Prostate gland (tissue), 2 donors: ENCODE measurements at regions of chr2 and their contacts with region 1.

Region 1: DNA sequence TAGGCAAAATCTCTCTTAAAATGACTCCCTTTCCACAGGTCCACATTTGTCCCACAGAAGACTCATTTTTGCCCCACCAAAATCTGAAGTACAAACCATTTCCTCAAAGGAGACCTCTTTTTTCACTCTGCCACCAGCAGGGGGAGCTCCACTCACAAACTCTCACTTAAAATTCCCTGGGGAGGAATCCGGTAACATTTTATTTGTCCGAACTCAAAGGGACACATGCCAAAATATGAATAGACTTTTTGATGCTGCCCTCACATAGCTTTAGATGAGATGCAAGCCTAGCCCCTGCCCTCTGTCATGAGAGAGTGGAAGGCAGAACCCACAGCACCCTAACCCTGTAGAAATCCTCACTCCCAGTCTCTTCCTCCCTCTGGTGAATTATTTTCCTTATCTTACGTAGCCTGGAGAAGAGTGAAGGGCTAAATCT is 57.1 kb downstream of the RMDN2 start:
- DNase-seq: peak; percentile 60
- H3K4me3 ChIP-seq: no peak overlapping the region
- H3K27ac ChIP-seq: no peak overlapping the region
- H3K4me1 ChIP-seq: no peaks in the 10 kb centered on the region
- H3K27me3 ChIP-seq: no peaks in the 10 kb centered on the region
- CTCF ChIP-seq: peak; percentile 78 to 90 (median 82)
- POLR2A ChIP-seq: no peak

Region 2: GRCh38 chr2:37925063-37925897 is 56.9 kb before region 1 on chr2 and contains the start of gene RMDN2:
- intact Hi-C with region 1: no loop called
- DNase-seq: peak; percentile 84
- H3K4me3 ChIP-seq: peak within 1 kb of the TSS; percentile 86 to 87
- H3K27ac ChIP-seq: peak within 1 kb of the TSS; percentile 89 to 90
- H3K4me1 ChIP-seq: no peaks in the 10 kb centered on the region
- H3K27me3 ChIP-seq: no peaks in the 10 kb centered on the region
- CTCF ChIP-seq: peak in 1 of 4 experiments; percentile 8
- POLR2A ChIP-seq: peak; percentile 28
- total RNA-seq, gene RMDN2: 9.0 to 9.2 TPM

Region 3: GRCh38 chr2:38260469-38260868 is 278.3 kb after region 1 on chr2:
- intact Hi-C with region 1: no loop called
- DNase-seq: no peak
- H3K4me3 ChIP-seq: no peak overlapping the region
- H3K27ac ChIP-seq: peak overlapping the region in 1 of 2 donors; percentile 17
- H3K4me1 ChIP-seq: no peaks in the 10 kb centered on the region
- H3K27me3 ChIP-seq: no peaks in the 10 kb centered on the region
- CTCF ChIP-seq: no peak
- POLR2A ChIP-seq: no peak

Region 4: DNA sequence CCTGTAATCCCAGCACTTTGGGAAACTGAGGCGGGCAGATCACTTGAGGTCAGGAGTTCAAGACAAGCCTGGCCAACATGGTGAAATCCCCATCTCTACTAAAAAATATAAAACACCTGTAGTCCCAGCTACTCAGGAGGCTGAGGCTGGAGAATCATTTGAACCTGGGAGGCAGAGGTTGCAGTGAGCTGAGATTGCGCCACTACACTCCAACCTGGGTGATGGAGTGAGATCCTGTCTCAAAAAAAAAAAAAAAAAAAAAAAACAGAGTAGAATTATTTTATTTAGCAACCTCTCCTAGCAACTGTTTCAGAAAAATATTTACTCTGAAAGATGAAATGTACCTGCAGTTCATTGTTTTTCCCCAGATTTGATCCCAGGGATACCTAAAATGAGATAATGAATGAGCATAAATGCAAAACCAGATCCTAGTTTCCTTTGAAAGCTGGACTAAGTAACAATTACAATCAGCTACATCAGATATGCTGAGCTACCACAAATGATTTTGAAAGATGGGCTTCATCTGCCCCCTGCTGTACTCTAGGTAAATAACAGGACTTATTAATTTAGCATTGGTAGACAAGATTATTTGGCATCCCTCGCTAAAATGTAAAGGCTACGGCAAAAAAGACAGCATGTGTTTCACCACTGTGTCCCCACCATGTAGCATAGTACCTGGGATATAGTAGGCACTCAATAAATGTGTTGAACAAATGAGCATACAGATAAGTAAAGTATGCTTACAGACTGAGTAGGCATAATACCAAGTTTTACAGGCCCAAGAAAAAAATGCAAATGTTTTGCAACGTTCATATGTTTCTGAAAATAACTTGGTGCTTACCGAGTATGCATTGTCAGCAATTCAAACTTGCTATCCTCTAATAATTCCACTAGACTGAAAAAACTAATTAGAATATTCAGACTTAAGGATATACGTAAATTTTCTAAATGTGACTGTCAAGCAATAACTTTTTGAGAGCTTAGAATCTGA is 292.4 kb after region 1 on chr2:
- intact Hi-C with region 1: loop called (anchors 2 kb)
- DNase-seq: peak; percentile 68
- H3K4me3 ChIP-seq: no peak overlapping the region
- H3K27ac ChIP-seq: no peak overlapping the region
- H3K4me1 ChIP-seq: no peaks in the 10 kb centered on the region
- H3K27me3 ChIP-seq: no peaks in the 10 kb centered on the region
- CTCF ChIP-seq: peak; percentile 48 to 90 (median 78)
- POLR2A ChIP-seq: no peak